SK-N-SH (cell line): ENCODE measurements at regions of chr2 and their contacts with region 1.

Region 1: DNA sequence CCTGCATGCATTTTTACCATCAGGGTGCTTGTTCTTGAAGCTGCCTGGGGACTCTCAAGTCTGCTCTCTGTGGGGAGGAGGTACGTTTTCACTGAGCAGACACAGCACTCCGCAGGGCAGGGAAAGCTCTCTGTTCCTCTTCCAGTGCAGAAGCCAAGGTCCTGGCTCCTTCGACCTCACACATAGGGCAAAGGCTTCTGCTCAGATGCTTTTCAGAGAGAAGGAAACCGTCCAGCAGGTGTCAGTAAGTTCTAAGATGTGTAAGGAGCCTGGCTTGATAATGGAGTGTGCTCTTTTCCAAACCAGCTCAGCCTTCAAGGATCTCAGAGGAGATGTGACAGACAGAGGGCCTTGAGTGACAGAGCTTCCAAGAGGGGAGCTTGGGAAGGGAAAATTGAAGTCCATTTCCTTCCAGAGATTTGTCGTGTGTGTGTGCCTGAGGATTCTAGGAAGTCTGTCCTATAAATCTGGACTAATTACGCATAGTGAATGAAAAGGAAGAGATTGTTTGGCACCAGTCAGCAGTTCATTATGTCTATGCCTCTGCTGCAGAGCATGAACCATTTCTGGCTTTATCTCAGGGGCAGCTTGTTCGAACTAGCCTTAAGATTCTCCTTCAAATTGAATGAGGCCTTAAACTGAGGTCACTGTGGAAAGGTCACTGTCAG is 67.3 kb upstream of the UPP2 start:
- DNase-seq: peak; percentile 39
- H3K4me3 ChIP-seq: no peak overlapping the region
- H3K27ac ChIP-seq: no peak overlapping the region
- H3K4me1 ChIP-seq: peaks cover 0 to 5% of the 10 kb centered on the region in 2 experiments; a peak in 1 of 4 replicates
- H3K27me3 ChIP-seq: no peaks in the 10 kb centered on the region
- CTCF ChIP-seq: peak; percentile 53
- EP300 ChIP-seq: no peak
- RAD21 ChIP-seq: peak; percentile 80

Region 2: DNA sequence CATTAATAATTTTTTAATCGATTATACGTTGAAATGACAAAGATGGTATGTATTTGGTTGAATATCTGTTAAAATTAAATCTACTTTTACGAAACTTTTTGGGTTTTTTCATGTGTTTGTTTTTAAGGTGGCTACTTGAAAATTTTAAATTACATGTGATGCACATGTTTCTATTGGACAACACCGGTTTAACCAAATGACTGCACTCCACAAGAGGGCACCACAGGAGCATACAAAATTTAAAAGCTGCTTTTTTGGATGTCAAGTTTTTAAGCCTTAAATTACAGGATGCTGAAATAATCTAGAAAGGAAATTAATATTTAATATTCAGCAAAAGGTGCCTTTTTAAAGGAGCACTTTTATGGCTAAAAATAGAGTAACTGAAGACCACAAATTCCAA is 256.9 kb before region 1 on chr2:
- CTCF ChIA-PET with region 1: no interaction called
- POLR2A ChIA-PET with region 1: no interaction called
- DNase-seq: peak; percentile 39
- H3K4me3 ChIP-seq: no peak overlapping the region
- H3K27ac ChIP-seq: no peak overlapping the region
- H3K4me1 ChIP-seq: no peaks in the 10 kb centered on the region; a peak in 2 of 4 replicates
- H3K27me3 ChIP-seq: no peaks in the 10 kb centered on the region
- CTCF ChIP-seq: peak; percentile 92
- EP300 ChIP-seq: no peak
- RAD21 ChIP-seq: peak; percentile 89

Region 3: GRCh38 chr2:158045362-158045761 is 11.0 kb after region 1 on chr2:
- CTCF ChIA-PET with region 1: interaction called, 11 read pairs
- POLR2A ChIA-PET with region 1: no interaction called
- DNase-seq: no peak
- H3K4me3 ChIP-seq: no peak overlapping the region
- H3K27ac ChIP-seq: no peak overlapping the region
- H3K4me1 ChIP-seq: peaks cover 11 to 23% of the 10 kb centered on the region in 2 experiments; a peak in 3 of 4 replicates
- H3K27me3 ChIP-seq: no peaks in the 10 kb centered on the region
- CTCF ChIP-seq: no peak
- EP300 ChIP-seq: no peak
- RAD21 ChIP-seq: peak; percentile 24

Region 4: DNA sequence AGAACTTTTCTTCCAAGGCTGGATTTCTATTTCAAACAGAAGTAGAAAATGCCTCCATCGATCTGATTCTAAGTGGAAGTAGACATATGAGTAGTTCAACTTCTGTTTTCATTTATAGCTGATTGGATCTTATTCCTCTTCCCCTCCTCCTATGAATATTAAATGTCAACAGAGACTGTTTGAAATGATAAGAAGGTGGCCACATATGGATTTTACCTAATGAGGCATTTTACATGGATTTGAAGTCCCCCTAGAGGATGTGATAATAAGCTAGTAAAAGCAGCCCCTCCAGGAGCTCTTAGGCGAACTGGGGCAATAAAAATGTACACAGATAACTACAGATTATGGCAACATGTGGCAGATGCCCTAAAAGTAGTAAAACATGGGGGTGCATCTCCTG is 138.4 kb after region 1 on chr2:
- CTCF ChIA-PET with region 1: interaction called, 20 read pairs
- POLR2A ChIA-PET with region 1: no interaction called
- DNase-seq: peak; percentile 2
- H3K4me3 ChIP-seq: no peak overlapping the region
- H3K27ac ChIP-seq: no peak overlapping the region
- H3K4me1 ChIP-seq: peaks cover 0 to 3% of the 10 kb centered on the region in 2 experiments; a peak in 2 of 4 replicates
- H3K27me3 ChIP-seq: no peaks in the 10 kb centered on the region
- CTCF ChIP-seq: no peak
- EP300 ChIP-seq: no peak
- RAD21 ChIP-seq: no peak